ENCODE measurements at regions of chr1 and their contacts with region 1.

Region 1: GRCh38 chr1:108801101-108801500 is 54.6 kb downstream of the STXBP3 start:
- DNase-seq: no peak
- ATAC-seq: no peak
- H3K4me3 ChIP-seq: no peak overlapping the region
- H3K4me3 Mint-ChIP-seq: no peak overlapping the region
- H3K27ac ChIP-seq: no peak overlapping the region
- H3K27ac Mint-ChIP-seq: no peak overlapping the region
- H3K4me1 ChIP-seq: no peaks in the 10 kb centered on the region
- H3K4me1 Mint-ChIP-seq: no peaks in the 10 kb centered on the region
- H3K27me3 ChIP-seq: no peaks in the 10 kb centered on the region
- H3K27me3 Mint-ChIP-seq: no peaks in the 10 kb centered on the region
- CTCF ChIP-seq: no peak

Region 2: DNA sequence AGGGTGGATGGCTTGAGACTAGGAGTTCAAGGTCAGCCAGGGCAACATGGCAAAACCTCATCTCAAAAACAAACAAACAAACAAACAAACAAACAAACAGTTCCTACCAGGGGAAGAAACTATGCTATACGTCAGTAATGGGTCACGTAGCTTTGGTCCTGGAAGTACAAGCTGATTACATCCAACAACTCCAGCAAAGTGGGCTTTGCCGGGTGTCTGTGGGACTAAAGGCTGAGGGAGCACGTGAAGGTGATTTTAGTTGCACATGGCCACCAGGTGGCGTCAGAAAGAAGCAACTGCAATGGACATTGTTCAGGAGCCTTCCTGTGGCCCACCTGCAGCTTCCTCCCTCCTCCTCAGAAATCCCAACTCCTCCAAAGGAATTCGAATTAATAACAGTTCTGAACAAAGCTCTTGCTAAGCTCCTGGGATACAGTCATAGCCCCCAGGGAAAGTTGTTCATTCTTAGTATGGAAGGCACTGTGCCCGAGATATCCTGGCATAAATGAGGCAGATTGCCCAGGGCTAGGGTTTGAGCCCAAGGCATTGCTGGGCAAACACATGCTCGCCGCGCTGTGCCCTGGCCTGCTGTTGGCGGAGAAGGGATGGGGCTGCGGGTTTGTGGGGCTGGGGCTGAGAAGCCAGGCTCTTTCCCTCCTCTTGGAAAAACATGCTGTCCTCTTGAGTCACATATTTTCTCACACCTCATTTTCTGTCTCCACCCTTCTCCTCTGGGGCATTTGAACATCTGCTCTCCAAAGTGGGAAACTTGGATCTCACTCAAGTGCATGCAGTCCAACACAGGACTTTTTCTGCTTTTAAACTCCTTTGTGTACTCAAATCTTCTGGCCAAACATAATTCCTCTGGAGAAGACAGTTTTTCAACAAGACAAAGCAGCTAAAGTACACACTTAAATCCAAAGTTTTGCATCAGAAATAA is 27.2 kb after region 1 on chr1:
- CTCF ChIA-PET with region 1: no interaction called
- POLR2A ChIA-PET with region 1: no interaction called
- intact Hi-C with region 1: no loop called
- DNase-seq: peak; percentile 72
- ATAC-seq: no peak
- H3K4me3 ChIP-seq: no peak overlapping the region
- H3K4me3 Mint-ChIP-seq: no peak overlapping the region
- H3K27ac ChIP-seq: no peak overlapping the region
- H3K27ac Mint-ChIP-seq: no peak overlapping the region
- H3K4me1 ChIP-seq: peaks cover 0 to 3% of the 10 kb centered on the region in 2 donors
- H3K4me1 Mint-ChIP-seq: no peaks in the 10 kb centered on the region
- H3K27me3 ChIP-seq: peaks cover 0 to 3% (median 0%) of the 10 kb centered on the region in 4 experiments
- H3K27me3 Mint-ChIP-seq: no peaks in the 10 kb centered on the region
- CTCF ChIP-seq: no peak

Region 3: DNA sequence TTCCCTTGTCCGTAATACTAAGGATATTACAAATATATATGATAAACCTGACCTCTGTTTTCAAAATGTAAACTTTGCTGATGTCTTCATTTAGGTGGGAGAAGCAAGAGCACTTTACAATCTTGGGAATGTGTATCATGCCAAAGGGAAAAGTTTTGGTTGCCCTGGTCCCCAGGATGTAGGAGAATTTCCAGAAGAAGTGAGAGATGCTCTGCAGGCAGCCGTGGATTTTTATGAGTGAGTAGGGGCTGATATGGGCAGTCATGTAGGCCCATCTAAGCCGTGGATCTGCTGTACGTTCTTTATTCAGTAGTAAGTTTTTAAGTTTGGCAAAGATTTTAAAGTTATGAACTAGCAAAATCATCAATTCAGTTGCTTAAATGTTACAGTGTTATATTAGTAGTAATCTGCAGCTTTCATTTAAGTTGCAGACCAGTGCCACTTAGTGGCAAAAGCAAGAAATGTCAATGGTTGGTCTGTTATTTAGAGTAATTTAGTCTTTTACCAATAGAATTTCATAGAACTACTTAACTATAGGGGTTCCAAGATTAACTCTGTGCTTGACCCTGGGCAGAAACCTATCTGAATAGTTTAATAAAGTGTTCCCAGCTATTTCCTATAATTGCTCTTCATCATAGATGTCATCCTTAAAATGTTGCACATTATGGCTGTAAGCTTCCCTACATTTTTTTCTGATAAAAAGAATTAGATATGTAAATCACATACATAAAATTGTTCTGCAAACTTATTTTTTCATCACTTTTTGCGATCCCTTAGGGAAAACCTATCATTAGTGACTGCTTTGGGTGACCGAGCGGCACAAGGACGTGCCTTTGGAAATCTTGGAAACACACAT is 97.0 kb after region 1 on chr1:
- CTCF ChIA-PET with region 1: interaction called, 4 read pairs
- POLR2A ChIA-PET with region 1: no interaction called
- intact Hi-C with region 1: loop called (anchors 10 kb)
- DNase-seq: peak; percentile 66
- ATAC-seq: peak; percentile 62
- H3K4me3 ChIP-seq: no peak overlapping the region
- H3K4me3 Mint-ChIP-seq: no peak overlapping the region
- H3K27ac ChIP-seq: no peak overlapping the region
- H3K27ac Mint-ChIP-seq: no peak overlapping the region
- H3K4me1 ChIP-seq: no peaks in the 10 kb centered on the region
- H3K4me1 Mint-ChIP-seq: no peaks in the 10 kb centered on the region
- H3K27me3 ChIP-seq: no peaks in the 10 kb centered on the region
- H3K27me3 Mint-ChIP-seq: no peaks in the 10 kb centered on the region
- CTCF ChIP-seq: peak; percentile 77

Region 4: GRCh38 chr1:108961198-108961597 is 160.1 kb after region 1 on chr1:
- CTCF ChIA-PET with region 1: no interaction called
- POLR2A ChIA-PET with region 1: no interaction called
- intact Hi-C with region 1: no loop called
- DNase-seq: no peak
- ATAC-seq: no peak
- H3K4me3 ChIP-seq: no peak overlapping the region
- H3K4me3 Mint-ChIP-seq: no peak overlapping the region
- H3K27ac ChIP-seq: no peak overlapping the region
- H3K27ac Mint-ChIP-seq: no peak overlapping the region
- H3K4me1 ChIP-seq: peaks cover 16 to 17% of the 10 kb centered on the region in 2 donors
- H3K4me1 Mint-ChIP-seq: peaks cover 39% of the 10 kb centered on the region
- H3K27me3 ChIP-seq: no peaks in the 10 kb centered on the region
- H3K27me3 Mint-ChIP-seq: no peaks in the 10 kb centered on the region
- CTCF ChIP-seq: no peak

Region 5: GRCh38 chr1:108972951-108973350 is 171.8 kb after region 1 on chr1:
- CTCF ChIA-PET with region 1: no interaction called
- POLR2A ChIA-PET with region 1: no interaction called
- intact Hi-C with region 1: no loop called
- DNase-seq: no peak
- ATAC-seq: no peak
- H3K4me3 ChIP-seq: no peak overlapping the region
- H3K4me3 Mint-ChIP-seq: no peak overlapping the region
- H3K27ac ChIP-seq: no peak overlapping the region
- H3K27ac Mint-ChIP-seq: no peak overlapping the region
- H3K4me1 ChIP-seq: no peaks in the 10 kb centered on the region
- H3K4me1 Mint-ChIP-seq: no peaks in the 10 kb centered on the region
- H3K27me3 ChIP-seq: no peaks in the 10 kb centered on the region
- H3K27me3 Mint-ChIP-seq: no peaks in the 10 kb centered on the region
- CTCF ChIP-seq: no peak

Region 6: GRCh38 chr1:109020693-109021257 is 219.7 kb after region 1 on chr1:
- CTCF ChIA-PET with region 1: no interaction called
- POLR2A ChIA-PET with region 1: no interaction called
- intact Hi-C with region 1: no loop called
- DNase-seq: no peak
- ATAC-seq: no peak
- H3K4me3 ChIP-seq: no peak overlapping the region
- H3K4me3 Mint-ChIP-seq: no peak overlapping the region
- H3K27ac ChIP-seq: no peak overlapping the region
- H3K27ac Mint-ChIP-seq: no peak overlapping the region
- H3K4me1 ChIP-seq: no peaks in the 10 kb centered on the region
- H3K4me1 Mint-ChIP-seq: peaks cover 2% of the 10 kb centered on the region
- H3K27me3 ChIP-seq: no peaks in the 10 kb centered on the region
- H3K27me3 Mint-ChIP-seq: no peaks in the 10 kb centered on the region
- CTCF ChIP-seq: no peak